Right cardiac atrium (tissue), 5 donors: ENCODE measurements at regions of chr17 and their contacts with region 1.

Region 1: DNA sequence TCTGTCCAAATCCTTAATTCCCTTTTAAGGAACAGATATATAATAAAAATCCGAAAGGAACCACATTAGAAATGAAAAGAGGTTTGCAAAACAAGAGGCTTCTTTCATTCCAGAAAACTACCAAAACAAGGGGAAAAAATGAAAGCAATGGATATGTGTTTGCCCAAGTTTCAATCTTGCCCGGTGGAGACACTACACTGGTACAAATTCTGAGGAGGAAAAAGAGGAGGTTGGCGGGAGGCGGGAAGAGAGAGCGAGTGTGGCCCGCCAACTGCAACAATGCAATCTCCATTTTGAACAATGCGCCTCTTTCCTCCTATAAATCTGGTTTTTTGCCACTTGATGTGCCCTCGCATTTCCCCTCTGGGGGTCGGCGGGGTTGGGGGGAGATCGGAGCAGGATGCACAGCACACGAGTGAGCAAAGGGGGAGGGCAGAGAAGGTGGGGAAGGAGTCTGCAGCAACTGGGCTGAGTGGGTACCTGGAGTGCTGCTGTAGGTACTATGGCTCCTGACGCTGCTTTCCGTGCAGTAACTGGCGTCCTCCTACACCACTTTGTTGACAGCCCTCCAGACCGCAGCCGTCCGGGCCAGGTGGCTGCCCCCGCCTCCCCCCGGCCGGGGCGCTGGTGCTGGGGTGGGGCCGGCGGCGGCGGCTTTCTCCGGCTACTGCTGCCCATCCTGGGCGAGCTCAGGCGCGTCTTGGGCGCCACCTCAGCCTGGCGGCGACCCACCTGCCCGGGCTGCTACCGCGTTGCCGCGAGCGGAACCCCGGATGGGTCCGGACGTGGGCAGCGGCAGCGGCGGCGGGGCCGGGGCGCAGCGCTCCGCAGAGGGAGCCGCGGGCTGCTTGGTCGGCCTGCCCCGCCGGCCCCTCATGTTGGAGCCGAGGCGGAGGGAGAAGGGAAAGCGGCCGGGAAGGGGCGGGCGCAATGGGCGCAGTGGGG is 93.8 kb upstream of the PLEKHM1 start:
- DNase-seq: peak; percentile 54 to 84 (median 72)
- ATAC-seq: peak; percentile 55 to 75
- H3K4me3 ChIP-seq: peak overlapping the region; percentile 69
- H3K27ac ChIP-seq: peak overlapping the region; percentile 10
- H3K4me1 ChIP-seq: no peaks in the 10 kb centered on the region
- H3K27me3 ChIP-seq: no peaks in the 10 kb centered on the region

Region 2: GRCh38 chr17:46264456-46265198 is 680.3 kb after region 1 on chr17:
- intact Hi-C with region 1: loop called in 1 of 4 experiments (anchors 5 kb)
- DNase-seq: no peak
- ATAC-seq: no peak
- H3K4me3 ChIP-seq: no peak overlapping the region
- H3K27ac ChIP-seq: no peak overlapping the region
- H3K4me1 ChIP-seq: no peaks in the 10 kb centered on the region
- H3K27me3 ChIP-seq: no peaks in the 10 kb centered on the region